HCT116 (cell line): ENCODE measurements at regions of chrX and their contacts with region 1.

Region 1: GRCh38 chrX:39175418-39176058 is 374.3 kb downstream of the MID1IP1 start:
- DNase-seq: no peak
- ATAC-seq: no peak
- H3K4me3 ChIP-seq: no peak overlapping the region
- H3K27ac ChIP-seq: no peak overlapping the region
- H3K4me1 ChIP-seq: no peaks in the 10 kb centered on the region
- H3K27me3 ChIP-seq: no peaks in the 10 kb centered on the region
- CTCF ChIP-seq: no peak
- POLR2A ChIP-seq: no peak
- RAD21 ChIP-seq: no peak

Region 2: DNA sequence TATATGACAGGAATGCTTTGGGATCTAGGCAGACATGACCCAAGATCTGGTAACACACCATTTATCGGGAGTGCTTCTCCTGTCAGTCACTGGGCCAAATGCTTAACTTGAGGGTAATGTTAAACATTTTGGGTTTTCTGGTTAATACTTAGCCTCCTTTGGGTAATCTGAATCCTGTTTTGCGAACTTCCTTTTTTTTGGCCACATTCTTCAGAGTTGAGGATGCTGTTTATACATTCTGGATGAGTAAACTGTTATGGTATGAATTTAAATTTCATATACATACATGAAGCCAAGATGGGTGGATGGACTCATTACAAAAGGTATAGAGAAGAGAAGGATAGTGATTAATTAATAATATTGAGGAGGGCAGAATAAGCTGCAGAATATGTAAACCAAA is 338.1 kb before region 1 on chrX:
- CTCF ChIA-PET with region 1: no interaction called
- POLR2A ChIA-PET with region 1: no interaction called
- RAD21 ChIA-PET with region 1: no interaction called
- intact Hi-C with region 1: no loop called
- DNase-seq: no peak
- ATAC-seq: no peak
- H3K4me3 ChIP-seq: no peak overlapping the region
- H3K27ac ChIP-seq: no peak overlapping the region
- H3K4me1 ChIP-seq: no peaks in the 10 kb centered on the region
- H3K27me3 ChIP-seq: no peaks in the 10 kb centered on the region
- CTCF ChIP-seq: no peak
- POLR2A ChIP-seq: no peak
- RAD21 ChIP-seq: no peak

Region 3: GRCh38 chrX:39162322-39162735 is 13.2 kb before region 1 on chrX:
- CTCF ChIA-PET with region 1: no interaction called
- POLR2A ChIA-PET with region 1: no interaction called
- RAD21 ChIA-PET with region 1: no interaction called
- intact Hi-C with region 1: no loop called
- DNase-seq: no peak
- ATAC-seq: no peak
- H3K4me3 ChIP-seq: no peak overlapping the region
- H3K27ac ChIP-seq: no peak overlapping the region
- H3K4me1 ChIP-seq: no peaks in the 10 kb centered on the region
- H3K27me3 ChIP-seq: no peaks in the 10 kb centered on the region
- CTCF ChIP-seq: no peak
- POLR2A ChIP-seq: no peak
- RAD21 ChIP-seq: no peak

Region 4: DNA sequence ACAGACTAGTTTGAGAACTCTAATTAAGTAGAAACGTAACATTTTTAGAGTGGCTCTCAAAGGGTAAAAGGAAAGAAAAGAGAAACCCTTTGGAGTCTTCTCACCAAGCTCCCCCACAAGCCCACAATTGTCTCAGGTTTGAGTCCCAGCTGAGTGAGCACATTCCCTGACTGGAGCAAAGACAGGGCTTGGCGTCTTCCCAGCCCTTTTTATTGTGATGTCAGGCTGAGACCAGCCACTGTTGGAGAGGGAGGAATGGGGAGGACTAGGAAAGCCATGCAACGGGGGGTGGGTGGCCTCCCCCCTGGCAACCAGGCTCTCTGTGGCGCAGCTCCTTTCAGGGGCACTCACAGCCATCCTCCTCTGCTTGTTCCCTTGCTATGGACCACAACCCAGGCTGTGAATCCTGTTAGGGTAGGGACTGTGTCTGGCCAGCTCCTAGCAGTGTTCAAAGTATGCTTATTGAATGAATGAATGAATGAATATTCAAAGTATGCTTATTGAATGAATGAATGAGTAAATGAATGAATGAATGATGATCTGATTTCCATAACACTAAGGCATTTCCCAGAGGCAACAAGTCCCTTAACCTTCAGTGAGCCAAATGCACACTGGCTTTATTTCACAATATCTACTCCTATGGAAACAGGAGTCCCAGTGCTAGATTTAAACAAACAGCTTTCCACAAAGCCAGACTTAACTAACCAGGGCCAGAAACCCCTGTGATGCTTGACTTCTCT is 39.0 kb after region 1 on chrX:
- CTCF ChIA-PET with region 1: no interaction called
- POLR2A ChIA-PET with region 1: no interaction called
- RAD21 ChIA-PET with region 1: no interaction called
- intact Hi-C with region 1: loop called (anchors 2 kb)
- DNase-seq: no peak
- ATAC-seq: no peak
- H3K4me3 ChIP-seq: no peak overlapping the region
- H3K27ac ChIP-seq: no peak overlapping the region
- H3K4me1 ChIP-seq: 0 out of 4 replicates have a peak, but pooled peaks cover 0 to 4% of the 10 kb centered on the region in 2 experiments
- H3K27me3 ChIP-seq: no peaks in the 10 kb centered on the region; the same call in 1 of the 2 replicates
- CTCF ChIP-seq: no peak
- POLR2A ChIP-seq: no peak
- RAD21 ChIP-seq: no peak